ENCODE measurements at regions of chr5 and their contacts with region 1.

Region 1: GRCh38 chr5:932628-933250 is 40.1 kb downstream of the TRIP13 start:
- DNase-seq: no peak
- ATAC-seq: no peak
- H3K4me3 ChIP-seq: no peak overlapping the region
- H3K27ac ChIP-seq: no peak overlapping the region
- H3K4me1 ChIP-seq: no peaks in the 10 kb centered on the region
- H3K27me3 ChIP-seq: no peaks in the 10 kb centered on the region
- CTCF ChIP-seq: no peak
- EP300 ChIP-seq: no peak
- POLR2A ChIP-seq: no peak
- RAD21 ChIP-seq: no peak

Region 2: DNA sequence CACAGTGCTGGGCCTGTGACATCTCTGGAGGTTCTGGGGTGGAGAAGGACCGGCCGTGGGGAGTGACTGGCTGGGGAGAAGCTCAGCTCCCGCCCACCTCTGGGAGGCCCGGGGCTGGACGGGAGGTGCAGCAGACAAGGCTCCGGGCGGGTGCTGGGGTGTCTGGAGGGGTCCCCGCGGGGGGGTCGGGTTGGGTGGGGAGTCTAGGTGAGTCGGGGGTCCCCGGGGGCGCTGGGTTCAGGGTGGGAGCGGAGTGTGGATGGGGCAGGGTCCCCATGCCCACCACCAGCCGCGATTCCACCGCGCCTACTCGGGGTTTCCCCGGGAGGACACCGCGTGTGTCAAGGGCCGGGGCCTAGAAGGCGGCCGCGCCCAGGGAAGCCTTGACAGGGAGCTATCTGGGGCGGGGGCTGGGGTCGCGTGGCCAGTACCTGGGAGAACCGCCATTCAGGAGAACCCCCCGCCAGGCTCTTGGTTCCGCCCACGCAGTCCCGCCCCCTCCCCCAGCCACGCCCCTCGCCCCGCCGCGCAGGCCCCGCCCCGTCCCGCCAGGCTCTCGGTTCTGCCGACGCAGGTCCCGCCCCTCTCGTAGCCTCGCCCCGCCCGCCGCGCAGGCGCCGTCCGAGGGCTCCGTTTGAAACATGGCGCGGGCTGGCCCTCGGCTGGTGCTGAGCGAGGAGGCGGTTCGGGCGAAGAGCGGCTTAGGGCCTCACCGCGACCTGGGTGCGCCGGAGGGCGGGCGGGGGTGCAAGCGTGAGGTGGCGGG is 320.8 kb before region 1 on chr5 and contains the start of gene CEP72:
- CTCF ChIA-PET with region 1: no interaction called
- POLR2A ChIA-PET with region 1: no interaction called
- RAD21 ChIA-PET with region 1: no interaction called
- SMC1A ChIA-PET with region 1: no interaction called
- in situ Hi-C with region 1: no loop called
- intact Hi-C with region 1: no loop called
- DNase-seq: peak; percentile 40
- ATAC-seq: peak; percentile 95
- H3K4me3 ChIP-seq: peak within 1 kb of the TSS; percentile 83
- H3K27ac ChIP-seq: peak within 1 kb of the TSS; percentile 61
- H3K4me1 ChIP-seq: peaks cover 16% of the 10 kb centered on the region
- H3K27me3 ChIP-seq: no peaks in the 10 kb centered on the region; a peak in 1 of 4 replicates
- CTCF ChIP-seq: no peak
- EP300 ChIP-seq: no peak
- POLR2A ChIP-seq: peak; percentile 89
- RAD21 ChIP-seq: no peak
- polyA plus RNA-seq, gene CEP72: 0.35 to 0.99 TPM

Region 3: DNA sequence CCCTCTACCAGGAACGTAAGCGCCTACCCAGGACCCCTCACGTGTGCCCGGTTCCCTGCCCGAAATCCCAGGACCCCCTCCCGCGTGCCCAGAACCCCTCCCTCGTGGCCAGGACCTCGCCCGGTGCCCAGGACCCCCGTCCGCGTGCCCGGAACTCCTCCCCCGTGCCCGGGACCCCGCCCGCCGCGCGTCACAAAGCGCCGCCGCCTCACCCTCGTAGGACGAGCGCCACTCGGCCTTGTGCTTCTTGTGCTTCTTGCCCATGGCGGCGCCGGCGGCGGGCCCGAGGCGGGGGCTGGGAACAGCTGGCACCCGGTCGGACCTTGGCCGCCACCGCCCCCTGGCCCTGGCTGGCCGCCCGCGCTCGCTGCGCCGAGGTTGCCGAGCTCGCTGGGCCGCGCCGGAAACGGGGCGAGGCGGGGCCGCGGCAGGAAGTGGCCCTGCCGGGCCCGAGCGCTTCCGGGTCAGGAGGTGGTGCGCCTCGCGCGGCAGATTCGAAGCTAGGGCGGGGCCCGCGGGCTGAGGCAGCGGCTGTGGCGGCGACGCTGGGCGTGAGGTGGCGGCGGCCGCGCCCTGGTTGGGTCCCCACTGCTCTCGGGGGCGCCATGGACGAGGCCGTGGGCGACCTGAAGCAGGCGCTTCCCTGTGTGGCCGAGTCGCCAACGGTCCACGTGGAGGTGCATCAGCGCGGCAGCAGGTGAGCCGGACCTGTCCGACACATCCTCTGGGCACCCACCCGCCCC is 40.2 kb before region 1 on chr5 and contains the starts of genes BRD9 and TRIP13:
- CTCF ChIA-PET with region 1: no interaction called
- POLR2A ChIA-PET with region 1: no interaction called
- RAD21 ChIA-PET with region 1: no interaction called
- SMC1A ChIA-PET with region 1: no interaction called
- in situ Hi-C with region 1: no loop called
- intact Hi-C with region 1: no loop called
- DNase-seq: peak; percentile 4
- ATAC-seq: peak; percentile 97
- H3K4me3 ChIP-seq: peak within 1 kb of the TSS; percentile 97
- H3K27ac ChIP-seq: peak within 1 kb of the TSS; percentile 88
- H3K4me1 ChIP-seq: peaks cover 14% of the 10 kb centered on the region
- H3K27me3 ChIP-seq: no peaks in the 10 kb centered on the region
- CTCF ChIP-seq: 0 out of 6 replicates have a peak, but pooled peaks of 1 of the 3 experiments have one; percentile 1
- EP300 ChIP-seq: no peak
- POLR2A ChIP-seq: peak; percentile 93
- RAD21 ChIP-seq: no peak
- polyA plus RNA-seq, gene BRD9: 2.0 to 4.7 TPM
- polyA plus RNA-seq, gene TRIP13: 15.1 to 20.5 TPM

Region 4: DNA sequence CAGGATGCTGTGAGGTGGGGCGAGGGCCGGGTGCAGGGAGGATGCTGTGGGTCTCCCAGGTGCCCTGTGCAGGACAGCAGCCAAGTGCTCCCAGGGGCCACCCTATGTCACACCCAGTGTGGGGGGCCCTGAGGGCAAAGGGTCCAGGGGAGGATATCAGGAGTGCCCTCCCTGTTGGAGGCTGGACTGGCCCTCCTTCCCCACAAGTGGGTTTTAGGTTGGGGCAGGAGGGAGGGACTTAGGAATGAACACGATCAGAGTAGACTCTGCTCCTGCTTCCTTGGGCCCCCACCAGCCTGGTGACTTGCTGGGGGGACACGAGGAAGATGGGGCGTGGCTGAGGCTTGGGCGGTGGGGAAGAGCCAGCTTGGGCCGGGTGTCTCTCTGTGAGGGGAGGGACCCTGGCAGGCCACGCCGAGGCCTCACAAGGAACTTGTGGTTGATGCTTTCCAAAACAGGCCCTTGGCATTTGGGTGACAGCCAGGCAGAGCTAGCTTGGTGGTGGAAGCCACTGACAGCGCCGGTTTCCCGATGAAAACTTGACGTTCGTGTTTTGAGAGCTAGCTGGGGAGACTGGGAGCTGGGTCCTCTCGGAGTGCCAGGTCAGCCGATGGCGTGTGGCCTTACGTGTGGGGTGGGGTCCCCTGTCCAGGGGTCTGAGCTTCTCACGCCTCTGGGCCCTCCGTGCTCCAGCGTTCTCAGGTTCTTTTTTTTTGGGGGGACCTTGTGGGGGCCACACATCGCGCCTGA is 720.0 kb after region 1 on chr5:
- CTCF ChIA-PET with region 1: no interaction called
- POLR2A ChIA-PET with region 1: no interaction called
- RAD21 ChIA-PET with region 1: no interaction called
- SMC1A ChIA-PET with region 1: no interaction called
- in situ Hi-C with region 1: loop called (anchors 10 kb)
- intact Hi-C with region 1: no loop called
- DNase-seq: no peak
- ATAC-seq: no peak
- H3K4me3 ChIP-seq: no peak overlapping the region
- H3K27ac ChIP-seq: no peak overlapping the region
- H3K4me1 ChIP-seq: peaks cover 8% of the 10 kb centered on the region; the same call in 1 of the 2 replicates
- H3K27me3 ChIP-seq: peaks cover 5 to 8% of the 10 kb centered on the region in 2 experiments; a peak in 3 of 4 replicates
- CTCF ChIP-seq: no peak
- EP300 ChIP-seq: no peak
- POLR2A ChIP-seq: no peak
- RAD21 ChIP-seq: no peak